GM12878 (cell line): ENCODE measurements at regions of chr7 and their contacts with region 1.

Region 1: GRCh38 chr7:102412548-102412947 is 16.4 kb downstream of the PRKRIP1 start:
- DNase-seq: no peak
- ATAC-seq: no peak
- H3K4me3 ChIP-seq: no peak overlapping the region
- H3K27ac ChIP-seq: no peak overlapping the region
- H3K4me1 ChIP-seq: peaks cover 36% of the 10 kb centered on the region
- H3K27me3 ChIP-seq: no peaks in the 10 kb centered on the region
- CTCF ChIP-seq: peak; percentile 46 to 48 (median 47); a peak in 5 of 6 replicates
- EP300 ChIP-seq: no peak
- POLR2A ChIP-seq: no peak
- RAD21 ChIP-seq: peak; percentile 72

Region 2: GRCh38 chr7:102425639-102426267 is 13.2 kb after region 1 on chr7:
- CTCF ChIA-PET with region 1: interaction called, 32 read pairs
- POLR2A ChIA-PET with region 1: interaction called, 48 read pairs
- RAD21 ChIA-PET with region 1: interaction called, 31 read pairs
- SMC1A ChIA-PET with region 1: interaction called, 89 read pairs
- in situ Hi-C with region 1: no loop called
- intact Hi-C with region 1: loop called (anchors 2 kb)
- DNase-seq: peak; percentile 84
- ATAC-seq: peak; percentile 84
- H3K4me3 ChIP-seq: peak overlapping the region; percentile 51; the same call in 1 of the 2 replicates
- H3K27ac ChIP-seq: peak overlapping the region; percentile 99
- H3K4me1 ChIP-seq: peaks cover 53% of the 10 kb centered on the region
- H3K27me3 ChIP-seq: no peaks in the 10 kb centered on the region
- CTCF ChIP-seq: no peak
- EP300 ChIP-seq: peak; percentile 78 to 86; a peak in 3 of 4 replicates
- POLR2A ChIP-seq: peak; percentile 91
- RAD21 ChIP-seq: no peak

Region 3: GRCh38 chr7:102433219-102434038 is 20.9 kb after region 1 on chr7 and contains the start of gene ORAI2:
- CTCF ChIA-PET with region 1: interaction called, 39 read pairs
- POLR2A ChIA-PET with region 1: interaction called, 12 read pairs
- RAD21 ChIA-PET with region 1: interaction called, 8 read pairs
- SMC1A ChIA-PET with region 1: interaction called, 89 read pairs
- in situ Hi-C with region 1: no loop called
- intact Hi-C with region 1: no loop called
- DNase-seq: no peak
- ATAC-seq: peak; percentile 58
- H3K4me3 ChIP-seq: peak within 1 kb of the TSS; percentile 74
- H3K27ac ChIP-seq: peak within 1 kb of the TSS; percentile 93
- H3K4me1 ChIP-seq: peaks cover 34% of the 10 kb centered on the region
- H3K27me3 ChIP-seq: no peaks in the 10 kb centered on the region
- CTCF ChIP-seq: 0 out of 6 replicates have a peak, but pooled peaks of 1 of the 3 experiments have one; percentile 2
- EP300 ChIP-seq: no peak
- POLR2A ChIP-seq: peak; percentile 86
- RAD21 ChIP-seq: no peak
- polyA plus RNA-seq, gene ORAI2: 5.8 to 8.0 TPM

Region 4: DNA sequence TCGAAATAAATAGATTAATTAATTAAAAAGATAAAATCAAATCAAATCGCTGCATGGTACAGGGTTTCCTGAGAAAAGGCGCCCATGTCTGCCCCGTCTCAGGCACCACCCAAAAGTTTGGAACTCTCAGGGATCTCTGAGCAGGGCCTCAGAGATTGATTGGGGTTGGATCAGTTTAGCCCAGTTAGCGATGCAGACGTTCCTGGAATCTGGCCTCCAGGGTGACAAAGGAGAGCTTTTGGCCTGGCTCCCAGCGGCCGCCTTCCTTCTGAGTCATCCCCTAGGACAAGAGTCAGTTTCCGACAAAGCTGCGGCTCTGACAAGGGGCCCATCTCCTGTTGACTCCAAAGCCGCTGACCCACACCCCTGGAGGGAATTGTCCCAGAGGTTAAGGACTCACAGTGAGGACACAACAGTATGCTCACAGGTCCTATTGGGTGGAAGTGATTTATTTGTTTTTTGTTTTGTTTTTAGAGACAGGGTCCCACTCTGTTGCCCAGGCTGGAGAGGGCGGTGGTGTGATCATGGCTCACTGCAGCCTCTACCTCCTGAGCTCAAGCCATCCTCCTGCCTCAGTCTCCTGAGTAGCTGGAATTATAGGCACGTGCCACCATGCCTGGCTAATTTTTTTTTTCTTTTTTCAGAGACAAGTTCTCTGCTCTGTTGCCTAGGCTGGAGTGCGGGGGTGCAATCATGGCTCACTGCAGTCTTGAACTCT is 27.7 kb after region 1 on chr7:
- CTCF ChIA-PET with region 1: interaction called, 39 read pairs
- POLR2A ChIA-PET with region 1: interaction called, 24 read pairs
- RAD21 ChIA-PET with region 1: interaction called, 13 read pairs
- SMC1A ChIA-PET with region 1: interaction called, 76 read pairs
- in situ Hi-C with region 1: no loop called
- intact Hi-C with region 1: loop called (anchors 1 kb)
- DNase-seq: no peak
- ATAC-seq: no peak
- H3K4me3 ChIP-seq: no peak overlapping the region
- H3K27ac ChIP-seq: peak overlapping the region; percentile 99; the same call in 1 of the 2 replicates
- H3K4me1 ChIP-seq: peaks cover 44% of the 10 kb centered on the region
- H3K27me3 ChIP-seq: no peaks in the 10 kb centered on the region
- CTCF ChIP-seq: no peak
- EP300 ChIP-seq: no peak
- POLR2A ChIP-seq: no peak
- RAD21 ChIP-seq: no peak

Region 5: DNA sequence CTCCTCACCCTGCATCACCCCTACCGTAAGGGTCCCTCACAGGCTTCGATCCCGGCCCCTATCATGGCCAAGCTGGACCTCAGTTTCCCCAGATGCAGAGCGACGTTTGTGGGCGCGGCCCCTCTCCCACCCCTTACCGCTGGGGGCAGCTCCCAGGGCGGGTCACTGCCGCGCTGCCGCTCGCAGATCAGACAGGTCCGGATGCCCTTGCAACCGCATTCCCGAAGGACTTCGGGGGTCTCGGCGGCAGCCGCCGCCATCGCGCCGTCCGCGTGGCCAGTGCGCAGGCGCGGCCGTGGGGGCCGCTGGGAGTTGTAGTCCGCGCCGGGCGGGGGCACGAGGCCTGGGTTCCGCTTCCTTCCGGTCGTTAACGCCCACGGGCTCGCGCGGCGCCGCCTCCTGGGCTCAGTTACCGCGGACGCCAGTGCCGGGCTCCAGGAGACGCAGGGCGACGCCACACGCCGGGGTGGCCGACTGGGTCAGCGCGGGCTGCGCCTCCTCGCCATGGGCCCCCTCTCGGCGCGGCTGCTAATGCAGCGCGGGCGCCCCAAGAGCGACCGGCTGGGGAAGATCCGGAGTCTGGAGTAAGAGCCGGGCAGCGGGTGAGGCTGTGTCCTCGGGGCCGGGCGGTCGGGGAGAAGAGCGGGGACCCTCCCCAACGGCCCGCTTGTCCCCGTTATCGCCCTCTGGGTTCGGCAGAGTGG is 52.2 kb after region 1 on chr7 and contains the starts of genes ALKBH4 and LRWD1:
- CTCF ChIA-PET with region 1: interaction called, 94 read pairs
- POLR2A ChIA-PET with region 1: interaction called, 5 read pairs
- RAD21 ChIA-PET with region 1: interaction called, 11 read pairs
- SMC1A ChIA-PET with region 1: interaction called, 18 read pairs
- in situ Hi-C with region 1: loop called (anchors 10 kb)
- intact Hi-C with region 1: no loop called
- DNase-seq: no peak
- ATAC-seq: peak; percentile 94
- H3K4me3 ChIP-seq: peak within 1 kb of the TSS; percentile 93
- H3K27ac ChIP-seq: peak within 1 kb of the TSS; percentile 89
- H3K4me1 ChIP-seq: peaks cover 15% of the 10 kb centered on the region
- H3K27me3 ChIP-seq: no peaks in the 10 kb centered on the region
- CTCF ChIP-seq: peak in 2 of 3 experiments; percentile 12 to 38; a peak in 4 of 6 replicates
- EP300 ChIP-seq: peak in 1 of 2 experiments; percentile 11; a peak in 1 of 4 replicates
- POLR2A ChIP-seq: peak; percentile 95
- RAD21 ChIP-seq: 0 out of 2 replicates have a peak, but pooled peaks have one; percentile 11
- polyA plus RNA-seq, gene ALKBH4: 4.1 to 9.1 TPM
- polyA plus RNA-seq, gene LRWD1: 0.40 to 2.0 TPM